IMR-90 (cell line): ENCODE measurements at regions of chr5 and their contacts with region 1.

Region 1: DNA sequence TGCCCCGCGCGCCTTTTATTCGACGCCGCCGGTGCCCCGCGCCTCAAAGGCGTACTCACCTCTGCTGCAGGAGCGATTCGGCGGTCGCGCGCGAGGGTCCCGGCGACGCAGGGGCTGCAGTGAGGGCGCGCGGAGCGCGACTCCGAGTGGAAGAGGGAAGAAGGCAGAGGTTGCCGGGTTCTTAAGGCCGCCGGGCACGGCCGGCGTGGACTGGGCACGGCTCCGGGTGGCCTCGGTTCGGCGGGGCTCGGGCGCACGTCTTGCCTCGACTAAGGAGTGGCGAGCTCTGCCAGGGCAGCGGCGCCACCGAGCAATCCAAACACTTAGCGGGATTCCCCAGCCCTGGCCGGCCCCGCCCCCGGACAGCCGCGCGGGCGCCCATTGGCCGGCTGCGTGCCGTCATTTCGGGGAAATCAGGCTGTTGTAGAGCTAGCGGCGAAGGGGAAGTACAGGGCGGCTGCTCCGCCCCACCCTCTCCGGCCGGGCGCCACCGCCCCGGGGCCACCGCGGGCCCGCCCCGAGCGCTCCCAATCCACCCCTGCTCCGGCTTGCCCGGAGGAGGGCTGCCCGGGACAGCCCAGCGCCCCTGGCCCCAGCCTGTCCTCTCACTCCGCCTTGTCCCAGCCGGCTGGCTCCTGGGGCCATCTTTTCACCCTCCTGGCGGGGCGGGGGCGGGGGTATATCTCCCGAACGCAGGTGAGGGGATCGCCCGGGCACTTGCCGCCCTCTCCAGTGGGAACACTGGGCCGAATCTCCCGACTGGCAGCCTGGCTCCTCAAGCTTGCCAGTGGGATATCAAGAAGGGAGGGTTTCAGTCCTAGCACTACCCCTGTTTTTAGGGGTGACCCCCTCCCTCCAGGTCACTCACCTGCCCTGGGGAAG is at the start of gene IRF1:
- DNase-seq: peak; percentile 94
- ATAC-seq: peak; percentile 89
- H3K4me3 ChIP-seq: peak within 1 kb of the TSS; percentile 91
- H3K27ac ChIP-seq: peak within 1 kb of the TSS; percentile 85
- H3K4me1 ChIP-seq: peaks cover 28% of the 10 kb centered on the region
- H3K27me3 ChIP-seq: no peaks in the 10 kb centered on the region
- CTCF ChIP-seq: no peak
- POLR2A ChIP-seq: peak; percentile 99
- RAD21 ChIP-seq: no peak
- total RNA-seq, gene IRF1: 6.9 and 11.1 TPM in 2 replicates

Region 2: DNA sequence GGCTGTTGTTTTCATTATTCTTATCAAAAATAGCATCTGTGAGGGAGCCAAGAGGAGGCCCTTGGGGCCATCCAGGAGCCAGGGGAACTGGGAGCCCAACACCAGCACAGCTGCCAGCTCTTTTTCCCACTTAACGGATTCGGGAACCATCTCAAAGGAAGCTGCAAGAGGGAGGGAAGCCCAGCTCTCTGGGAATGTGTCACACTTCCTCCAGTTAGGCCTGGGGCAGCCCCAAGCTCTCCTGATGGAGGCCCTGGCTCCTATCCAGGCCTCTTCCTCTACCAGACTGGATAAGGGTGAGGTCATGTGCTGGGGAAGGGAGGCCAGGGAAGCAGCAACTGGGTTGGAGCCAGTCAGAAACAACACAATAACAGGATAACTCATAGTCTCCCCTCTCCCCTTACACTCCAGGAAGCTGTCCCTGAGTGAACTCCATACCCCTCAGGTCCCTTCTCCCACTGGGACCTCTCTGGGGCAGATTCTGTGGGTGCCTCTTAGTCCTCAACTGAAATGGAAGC is 404.4 kb before region 1 on chr5:
- CTCF ChIA-PET with region 1: no interaction called
- POLR2A ChIA-PET with region 1: no interaction called
- dilution Hi-C with region 1: no loop called
- in situ Hi-C with region 1: loop called (anchors 25 kb)
- intact Hi-C with region 1: no loop called
- DNase-seq: peak; percentile 98
- ATAC-seq: peak; percentile 87
- H3K4me3 ChIP-seq: no peak overlapping the region
- H3K27ac ChIP-seq: peak overlapping the region; percentile 11
- H3K4me1 ChIP-seq: peaks cover 25% of the 10 kb centered on the region
- H3K27me3 ChIP-seq: no peaks in the 10 kb centered on the region
- CTCF ChIP-seq: no peak
- POLR2A ChIP-seq: no peak
- RAD21 ChIP-seq: peak; percentile 9; the same call in 1 of the 2 replicates

Region 3: DNA sequence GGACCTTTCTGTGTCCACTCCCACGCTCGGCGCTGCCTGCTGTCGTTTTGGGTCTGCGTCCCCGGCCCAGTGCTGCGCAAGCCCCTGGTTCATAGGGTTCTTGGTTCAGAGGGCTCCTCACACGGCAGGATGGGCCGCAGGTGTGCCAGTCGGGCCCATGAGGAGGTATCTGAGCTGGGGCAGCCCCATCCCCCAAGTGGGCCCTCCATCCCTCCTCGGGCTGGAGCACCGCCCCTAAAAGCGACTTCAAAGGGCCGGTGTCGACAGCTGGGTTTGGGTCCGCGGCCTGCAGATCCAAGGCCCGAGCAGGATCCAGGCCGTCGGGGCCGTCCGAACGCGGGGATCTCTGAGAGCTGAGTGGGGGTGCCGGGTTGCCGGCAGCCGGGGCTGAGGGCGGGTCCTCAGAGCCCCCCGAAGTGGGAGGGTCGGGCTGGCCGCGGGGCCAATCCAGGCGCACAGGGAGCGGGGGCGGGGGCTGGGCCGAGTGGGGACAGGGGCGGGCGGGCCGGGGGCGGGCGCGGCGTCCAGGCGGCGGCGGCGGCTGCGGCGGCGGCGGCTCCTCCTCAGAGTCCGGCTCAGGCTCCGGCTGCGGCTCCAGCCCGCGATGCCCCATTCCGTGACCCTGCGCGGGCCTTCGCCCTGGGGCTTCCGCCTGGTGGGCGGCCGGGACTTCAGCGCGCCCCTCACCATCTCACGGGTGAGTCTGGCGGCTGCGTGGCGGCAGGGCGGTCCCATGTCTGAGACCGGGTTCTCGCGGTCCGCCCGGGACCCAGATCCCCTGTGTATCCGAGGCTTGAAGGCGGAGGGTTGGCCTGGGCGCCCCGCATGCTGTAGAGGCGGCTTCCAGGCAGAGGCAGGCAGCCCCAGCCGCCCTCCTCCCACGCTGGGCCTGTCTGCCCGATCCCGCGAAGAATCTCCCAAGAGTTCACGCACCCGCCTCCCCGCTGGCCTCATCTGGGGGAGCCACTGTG is 233.3 kb before region 1 on chr5 and contains the start of gene PDLIM4:
- CTCF ChIA-PET with region 1: no interaction called
- POLR2A ChIA-PET with region 1: no interaction called
- dilution Hi-C with region 1: no loop called
- in situ Hi-C with region 1: no loop called
- intact Hi-C with region 1: no loop called
- DNase-seq: no peak
- ATAC-seq: peak; percentile 50
- H3K4me3 ChIP-seq: peak within 1 kb of the TSS; percentile 92
- H3K27ac ChIP-seq: peak within 1 kb of the TSS; percentile 97
- H3K4me1 ChIP-seq: peaks cover 32% of the 10 kb centered on the region
- H3K27me3 ChIP-seq: no peaks in the 10 kb centered on the region
- CTCF ChIP-seq: no peak
- POLR2A ChIP-seq: peak; percentile 55; the same call in 1 of the 2 replicates
- RAD21 ChIP-seq: no peak
- total RNA-seq, gene PDLIM4: 61.1 and 97.5 TPM in 2 replicates

Region 4: GRCh38 chr5:132646867-132647266 is 156.1 kb after region 1 on chr5:
- CTCF ChIA-PET with region 1: no interaction called
- POLR2A ChIA-PET with region 1: no interaction called
- dilution Hi-C with region 1: no loop called
- in situ Hi-C with region 1: no loop called
- intact Hi-C with region 1: no loop called
- DNase-seq: no peak
- ATAC-seq: no peak
- H3K4me3 ChIP-seq: no peak overlapping the region
- H3K27ac ChIP-seq: no peak overlapping the region
- H3K4me1 ChIP-seq: no peaks in the 10 kb centered on the region
- H3K27me3 ChIP-seq: no peaks in the 10 kb centered on the region
- CTCF ChIP-seq: no peak
- POLR2A ChIP-seq: no peak
- RAD21 ChIP-seq: no peak